Tibial artery (tissue), 4 donors: ENCODE measurements at regions of chr1 and their contacts with region 1.

Region 1: DNA sequence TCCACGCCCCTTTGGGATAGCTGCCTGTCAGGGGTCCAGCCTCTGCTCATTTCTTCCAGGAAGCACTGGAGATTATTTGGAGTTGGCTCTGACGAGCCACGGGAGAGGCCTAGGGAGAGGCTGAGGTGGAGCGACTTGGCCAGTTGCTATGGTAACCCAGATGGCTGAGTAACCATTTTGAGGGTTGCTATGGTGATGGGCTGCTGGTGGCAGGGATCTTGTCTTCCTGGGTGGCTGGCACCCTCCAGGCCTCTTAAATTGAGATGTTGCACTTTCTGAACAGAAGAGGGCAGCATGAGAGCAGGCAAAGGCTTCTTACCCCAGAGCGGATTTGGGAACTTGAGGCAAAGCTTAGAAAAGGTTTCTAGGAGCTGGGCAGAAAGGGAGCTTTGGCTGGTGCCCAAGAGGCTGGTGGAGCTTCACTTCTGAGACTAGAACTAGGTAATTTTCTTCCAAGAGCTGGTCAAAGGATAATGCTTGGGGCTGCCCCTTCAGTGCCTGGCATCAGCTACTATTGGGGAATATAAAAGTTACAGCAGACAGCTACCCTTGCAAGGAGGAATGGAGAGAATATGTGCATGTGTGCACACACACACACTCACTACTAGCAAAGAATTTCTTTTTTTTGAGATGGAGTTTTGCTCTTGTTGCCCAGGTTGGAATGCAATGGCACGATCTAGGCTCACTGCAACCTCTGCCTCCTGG is 72.5 kb downstream of the NDUFS5 start:
- DNase-seq: peak; percentile 62 to 83
- H3K4me3 ChIP-seq: no peak overlapping the region
- H3K27ac ChIP-seq: no peak overlapping the region
- H3K4me1 ChIP-seq: peaks cover 0 to 22% (median 10%) of the 10 kb centered on the region in 4 donors
- H3K27me3 ChIP-seq: no peaks in the 10 kb centered on the region
- CTCF ChIP-seq: peak; percentile 65 to 75

Region 2: DNA sequence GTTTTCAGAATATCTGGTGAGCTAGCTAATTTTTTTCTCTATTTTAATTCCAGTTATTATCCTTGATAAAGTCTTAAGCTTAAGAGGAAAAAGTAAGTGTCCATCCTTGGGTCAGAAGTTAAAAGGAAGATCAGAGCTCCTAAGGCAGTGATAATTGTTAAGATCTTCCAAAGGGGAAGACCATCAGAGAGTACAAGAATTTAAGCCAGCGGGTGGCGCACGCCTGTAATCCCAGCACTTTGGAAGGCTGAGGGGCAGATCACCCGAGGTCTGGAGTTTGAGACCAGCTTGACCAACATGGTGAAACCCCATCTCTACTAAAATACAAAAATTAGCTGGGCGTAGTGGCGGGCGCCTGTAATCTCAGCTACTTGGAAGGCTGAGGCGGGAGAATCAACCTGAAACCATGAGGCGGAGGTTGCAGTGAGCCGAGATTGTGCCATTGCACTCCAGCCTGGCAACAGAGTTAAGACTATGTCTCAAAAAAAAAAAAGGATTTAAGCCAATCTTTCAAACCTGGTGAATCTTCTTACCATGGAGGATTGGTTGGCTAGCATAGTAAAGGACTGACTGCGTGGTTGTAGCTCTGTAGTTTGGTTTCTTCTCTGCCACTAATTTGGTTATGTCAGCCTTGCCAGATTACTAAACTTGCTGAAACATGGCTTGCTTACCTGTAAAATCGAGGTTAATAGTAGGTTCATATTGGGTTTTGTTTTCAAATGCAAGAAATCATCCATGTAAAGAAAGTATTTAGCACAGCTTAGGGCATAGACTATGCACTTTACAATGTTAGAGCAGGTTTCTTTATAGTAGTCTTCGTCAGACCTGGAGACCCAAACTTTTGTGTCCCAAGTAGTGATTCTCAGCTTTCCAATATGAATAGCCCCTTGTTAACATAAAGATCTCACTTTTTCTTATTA is 91.7 kb before region 1 on chr1:
- intact Hi-C with region 1: no loop called
- DNase-seq: no peak
- H3K4me3 ChIP-seq: no peak overlapping the region
- H3K27ac ChIP-seq: no peak overlapping the region
- H3K4me1 ChIP-seq: peaks cover 0 to 9% (median 1%) of the 10 kb centered on the region in 4 donors
- H3K27me3 ChIP-seq: no peaks in the 10 kb centered on the region
- CTCF ChIP-seq: no peak

Region 3: GRCh38 chr1:39132505-39133339 is 34.0 kb after region 1 on chr1:
- intact Hi-C with region 1: loop called (anchors 5 kb)
- DNase-seq: peak; percentile 74 to 87
- H3K4me3 ChIP-seq: no peak overlapping the region
- H3K27ac ChIP-seq: peak overlapping the region; percentile 67 to 71
- H3K4me1 ChIP-seq: peaks cover 0 to 69% (median 48%) of the 10 kb centered on the region in 4 donors
- H3K27me3 ChIP-seq: no peaks in the 10 kb centered on the region
- CTCF ChIP-seq: peak; percentile 27 to 47

Region 4: GRCh38 chr1:39214998-39215873 is 116.5 kb after region 1 on chr1:
- intact Hi-C with region 1: no loop called
- DNase-seq: no peak
- H3K4me3 ChIP-seq: peak overlapping the region; percentile 7 to 15
- H3K27ac ChIP-seq: peak overlapping the region; percentile 59 to 72
- H3K4me1 ChIP-seq: peaks cover 0 to 95% (median 53%) of the 10 kb centered on the region in 4 donors
- H3K27me3 ChIP-seq: no peaks in the 10 kb centered on the region
- CTCF ChIP-seq: no peak

Region 5: DNA sequence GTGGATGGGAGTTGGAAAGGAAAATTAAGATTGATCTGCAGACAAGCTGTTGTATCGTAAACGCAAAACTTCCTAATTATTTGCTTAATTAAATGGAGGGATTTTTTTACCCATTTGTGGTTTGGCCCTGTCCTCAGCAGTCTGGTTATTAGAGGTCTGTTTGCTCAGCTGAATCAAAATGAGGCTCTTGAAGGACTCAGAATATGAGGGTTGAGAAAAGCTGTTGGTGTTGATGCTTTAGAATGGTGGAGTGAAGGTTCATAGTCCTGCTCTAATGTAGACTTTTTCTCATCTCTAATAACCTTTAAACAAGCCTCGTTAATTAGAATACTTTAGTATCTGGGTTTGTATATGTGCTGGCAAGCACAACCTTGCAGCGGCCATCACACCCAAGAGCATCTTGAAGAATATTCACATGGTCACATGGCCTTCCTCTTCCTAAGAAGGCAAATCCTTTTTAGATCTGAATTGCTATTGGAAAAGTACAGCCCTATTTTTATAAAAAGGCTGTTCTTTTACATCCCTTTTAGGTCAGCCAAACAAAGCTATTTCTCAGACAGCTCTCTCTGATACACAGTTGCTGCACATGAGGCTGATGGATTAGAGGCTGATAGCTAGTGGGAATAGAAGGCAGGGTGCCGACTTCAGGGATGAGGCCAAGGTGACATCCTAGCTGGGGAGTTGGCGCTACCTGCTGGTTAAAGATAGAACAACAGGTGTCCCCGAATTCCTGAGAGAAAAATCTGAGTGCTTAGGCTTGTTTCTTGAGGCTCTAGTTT is 159.6 kb after region 1 on chr1:
- intact Hi-C with region 1: loop called (anchors 5 kb)
- DNase-seq: peak; percentile 76 to 78
- H3K4me3 ChIP-seq: no peak overlapping the region
- H3K27ac ChIP-seq: peak overlapping the region; percentile 53 to 56
- H3K4me1 ChIP-seq: peaks cover 0 to 65% (median 14%) of the 10 kb centered on the region in 4 donors
- H3K27me3 ChIP-seq: no peaks in the 10 kb centered on the region
- CTCF ChIP-seq: peak; percentile 83 to 91

Region 6: GRCh38 chr1:39538588-39539465 is 440.1 kb after region 1 on chr1:
- intact Hi-C with region 1: loop called (anchors 5 kb)
- DNase-seq: peak; percentile 71 to 82
- H3K4me3 ChIP-seq: no peak overlapping the region
- H3K27ac ChIP-seq: no peak overlapping the region
- H3K4me1 ChIP-seq: peaks cover 0 to 3% (median 0%) of the 10 kb centered on the region in 4 donors
- H3K27me3 ChIP-seq: no peaks in the 10 kb centered on the region
- CTCF ChIP-seq: peak; percentile 81 to 89